ENCODE measurements at regions of chr16 and their contacts with region 1.

Region 1: GRCh38 chr16:58249780-58250478 is 44.9 kb downstream of the PRSS54 start:
- DNase-seq: peak; percentile 82
- H3K4me3 Mint-ChIP-seq: peak overlapping the region; percentile 85
- H3K27ac Mint-ChIP-seq: no peak overlapping the region
- H3K4me1 Mint-ChIP-seq: peaks cover 6% of the 10 kb centered on the region
- H3K27me3 Mint-ChIP-seq: peaks cover under 1% of the 10 kb centered on the region

Region 2: GRCh38 chr16:58047557-58048348 is 202.2 kb before region 1 on chr16:
- CTCF ChIA-PET with region 1: no interaction called
- intact Hi-C with region 1: no loop called
- DNase-seq: no peak
- H3K4me3 Mint-ChIP-seq: no peak overlapping the region
- H3K27ac Mint-ChIP-seq: no peak overlapping the region
- H3K4me1 Mint-ChIP-seq: no peaks in the 10 kb centered on the region
- H3K27me3 Mint-ChIP-seq: peaks cover 1% of the 10 kb centered on the region

Region 3: GRCh38 chr16:58187092-58187491 is 62.8 kb before region 1 on chr16:
- CTCF ChIA-PET with region 1: no interaction called
- intact Hi-C with region 1: no loop called
- DNase-seq: no peak
- H3K4me3 Mint-ChIP-seq: no peak overlapping the region
- H3K27ac Mint-ChIP-seq: no peak overlapping the region
- H3K4me1 Mint-ChIP-seq: peaks cover 16% of the 10 kb centered on the region
- H3K27me3 Mint-ChIP-seq: no peaks in the 10 kb centered on the region

Region 4: GRCh38 chr16:58198022-58198683 is 51.8 kb before region 1 on chr16 and contains the start of gene CSNK2A2:
- CTCF ChIA-PET with region 1: interaction called, 4 read pairs
- intact Hi-C with region 1: loop called (anchors 1 kb)
- DNase-seq: peak; percentile 64
- H3K4me3 Mint-ChIP-seq: peak within 1 kb of the TSS; percentile 81
- H3K27ac Mint-ChIP-seq: peak within 1 kb of the TSS; percentile 66
- H3K4me1 Mint-ChIP-seq: peaks cover 30% of the 10 kb centered on the region
- H3K27me3 Mint-ChIP-seq: peaks cover 7% of the 10 kb centered on the region
- total RNA-seq, gene CSNK2A2: 86.0 to 86.7 TPM

Region 5: GRCh38 chr16:58236231-58236690 is 13.7 kb before region 1 on chr16:
- CTCF ChIA-PET with region 1: interaction called, 3 read pairs
- intact Hi-C with region 1: loop called (anchors 1 kb)
- DNase-seq: peak; percentile 84
- H3K4me3 Mint-ChIP-seq: peak overlapping the region; percentile 86
- H3K27ac Mint-ChIP-seq: no peak overlapping the region
- H3K4me1 Mint-ChIP-seq: peaks cover 5% of the 10 kb centered on the region
- H3K27me3 Mint-ChIP-seq: peaks cover 11% of the 10 kb centered on the region

Region 6: DNA sequence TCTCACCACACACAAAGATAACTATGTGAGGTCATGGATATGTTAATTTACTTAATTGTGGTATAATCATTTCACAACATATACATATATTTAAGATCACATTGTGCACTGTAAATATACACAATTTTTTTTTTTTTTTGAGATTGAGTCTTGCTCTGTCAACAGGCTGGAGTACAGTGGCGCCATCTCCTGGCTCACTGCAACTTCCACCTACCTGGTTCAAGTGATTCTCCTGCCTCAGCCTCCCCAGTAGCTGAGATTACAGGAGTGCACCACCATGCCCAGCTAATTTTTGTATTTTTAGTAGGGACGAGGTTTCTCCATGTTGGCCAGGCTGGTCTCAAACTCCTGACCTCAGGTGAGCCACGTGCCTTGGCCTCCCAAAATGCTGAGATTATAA is 56.4 kb after region 1 on chr16:
- CTCF ChIA-PET with region 1: interaction called, 5 read pairs
- intact Hi-C with region 1: loop called (anchors 5 kb)
- DNase-seq: peak; percentile 82
- H3K4me3 Mint-ChIP-seq: no peak overlapping the region
- H3K27ac Mint-ChIP-seq: no peak overlapping the region
- H3K4me1 Mint-ChIP-seq: no peaks in the 10 kb centered on the region
- H3K27me3 Mint-ChIP-seq: peaks cover 2% of the 10 kb centered on the region

Measured in activated naive CD4-positive, alpha-beta T cell treated with anti-CD3 and anti-CD28 coated beads for 36 hours (primary cell).